A673 (cell line): ENCODE measurements at regions of chr6 and their contacts with region 1.

Region 1: DNA sequence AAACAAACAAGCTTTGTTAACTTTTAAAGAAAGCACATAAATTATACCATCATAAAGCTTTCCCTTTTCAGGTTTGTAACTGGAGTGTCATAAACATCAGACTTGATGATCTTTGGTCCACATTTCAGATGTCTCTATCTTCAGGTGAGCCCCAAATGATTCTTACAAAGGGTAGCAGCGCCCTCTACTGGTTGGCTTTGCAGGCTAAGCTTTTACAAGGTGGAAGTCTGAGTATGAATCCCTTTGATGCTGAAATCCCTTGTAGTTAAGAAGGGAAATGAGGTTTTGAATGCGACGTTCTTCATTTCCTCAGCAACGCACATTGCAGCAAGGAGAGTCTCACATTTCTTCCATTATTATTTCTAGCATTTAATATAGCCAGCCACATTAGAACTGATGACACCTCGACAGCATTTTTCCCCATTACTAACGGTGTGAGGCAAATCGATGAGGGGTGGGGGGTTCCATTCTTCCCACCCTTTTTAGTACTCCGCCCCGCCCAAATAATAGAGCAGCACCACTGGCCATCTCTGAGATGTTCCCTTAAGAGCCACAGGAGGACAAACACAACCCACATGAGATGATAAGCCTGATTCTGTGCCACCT is 126.3 kb upstream of the NT5E start:
- DNase-seq: peak; percentile 87
- H3K4me3 ChIP-seq: no peak overlapping the region
- H3K27ac ChIP-seq: no peak overlapping the region
- H3K4me1 ChIP-seq: no peaks in the 10 kb centered on the region
- H3K27me3 ChIP-seq: peaks cover 4% of the 10 kb centered on the region
- CTCF ChIP-seq: peak; percentile 94

Region 2: DNA sequence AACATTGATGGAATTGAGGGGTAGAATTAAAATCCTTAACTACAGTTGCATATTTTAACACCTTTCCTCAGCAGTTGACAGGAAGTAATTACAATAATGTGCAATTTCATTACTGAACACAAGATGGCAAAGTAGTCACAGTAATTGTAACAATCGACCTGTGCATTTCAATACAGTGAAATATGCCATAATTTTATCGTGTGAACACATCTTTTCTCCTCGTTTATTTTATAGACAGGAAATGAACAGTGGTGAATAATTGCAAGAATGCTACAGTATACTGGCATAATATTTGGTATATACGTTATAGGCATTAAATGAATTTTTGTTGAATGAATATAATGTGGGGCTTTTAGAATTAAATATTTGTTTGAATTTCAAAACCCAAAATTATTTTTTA is 1439.0 kb before region 1 on chr6:
- CTCF ChIA-PET with region 1: no interaction called
- POLR2A ChIA-PET with region 1: no interaction called
- intact Hi-C with region 1: loop called (anchors 10 kb)
- DNase-seq: peak; percentile 80
- H3K4me3 ChIP-seq: no peak overlapping the region
- H3K27ac ChIP-seq: no peak overlapping the region
- H3K4me1 ChIP-seq: peaks cover 18% of the 10 kb centered on the region
- H3K27me3 ChIP-seq: no peaks in the 10 kb centered on the region
- CTCF ChIP-seq: peak; percentile 79

Region 3: DNA sequence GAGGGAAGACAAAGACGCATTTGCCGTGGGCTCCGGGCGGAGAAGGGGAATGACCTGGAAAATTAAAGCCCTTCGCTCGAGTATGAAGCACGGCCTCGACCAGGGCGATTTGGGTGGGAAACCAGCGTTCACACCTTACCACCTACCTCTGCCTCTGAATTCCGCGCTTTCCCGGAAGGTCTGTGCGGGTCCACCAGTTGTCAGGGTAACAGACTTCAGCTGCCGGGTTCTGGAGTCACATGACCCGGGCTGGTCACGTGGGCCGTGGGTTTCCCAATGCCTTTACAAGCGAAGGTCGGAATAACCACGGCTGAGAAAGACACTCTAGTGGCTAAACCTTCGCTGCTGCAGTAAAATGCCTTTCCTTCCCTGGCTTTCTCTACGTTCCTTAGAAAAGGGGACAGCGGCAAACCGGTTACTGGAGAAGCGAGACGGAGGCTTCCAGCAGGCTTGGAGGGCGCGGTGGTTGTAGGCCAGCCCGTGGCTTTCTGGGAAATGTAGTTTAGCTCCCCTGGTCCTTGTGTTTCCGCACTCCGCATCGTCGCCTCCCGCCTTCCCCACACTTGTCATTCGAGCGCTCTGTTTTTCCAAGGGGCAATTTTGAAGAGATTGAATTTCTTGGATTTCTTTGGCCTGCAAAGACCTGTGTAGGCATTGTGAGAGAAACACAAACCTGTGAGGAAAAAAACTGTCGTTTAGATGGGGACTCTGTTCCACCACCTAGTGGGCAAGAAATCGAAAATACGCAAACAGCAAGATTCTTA is 1095.9 kb before region 1 on chr6 and contains the start of gene CEP162:
- CTCF ChIA-PET with region 1: interaction called, 3 read pairs
- POLR2A ChIA-PET with region 1: no interaction called
- intact Hi-C with region 1: loop called (anchors 10 kb)
- DNase-seq: peak; percentile 93
- H3K4me3 ChIP-seq: peak within 1 kb of the TSS; percentile 74
- H3K27ac ChIP-seq: peak within 1 kb of the TSS; percentile 70
- H3K4me1 ChIP-seq: peaks cover 8% of the 10 kb centered on the region
- H3K27me3 ChIP-seq: peaks cover 12% of the 10 kb centered on the region
- CTCF ChIP-seq: peak; percentile 76
- total RNA-seq, gene CEP162: 12.1 and 15.9 TPM in 2 replicates

Region 4: GRCh38 chr6:84422380-84422968 is 901.1 kb before region 1 on chr6:
- CTCF ChIA-PET with region 1: no interaction called
- POLR2A ChIA-PET with region 1: no interaction called
- intact Hi-C with region 1: loop called (anchors 2 kb)
- DNase-seq: peak; percentile 63
- H3K4me3 ChIP-seq: no peak overlapping the region
- H3K27ac ChIP-seq: no peak overlapping the region
- H3K4me1 ChIP-seq: no peaks in the 10 kb centered on the region
- H3K27me3 ChIP-seq: peaks cover 27% of the 10 kb centered on the region
- CTCF ChIP-seq: peak; percentile 76

Region 5: GRCh38 chr6:84764332-84765049 is 559.0 kb before region 1 on chr6 and contains the start of gene TBX18:
- CTCF ChIA-PET with region 1: no interaction called
- POLR2A ChIA-PET with region 1: no interaction called
- intact Hi-C with region 1: loop called (anchors 10 kb)
- DNase-seq: peak; percentile 95
- H3K4me3 ChIP-seq: peak within 1 kb of the TSS; percentile 72
- H3K27ac ChIP-seq: peak within 1 kb of the TSS; percentile 89
- H3K4me1 ChIP-seq: peaks cover 17% of the 10 kb centered on the region
- H3K27me3 ChIP-seq: peaks cover 71% of the 10 kb centered on the region
- CTCF ChIP-seq: 0 out of 2 replicates have a peak, but pooled peaks have one; percentile 27
- total RNA-seq, gene TBX18: 14.6 and 16.0 TPM in 2 replicates

Region 6: GRCh38 chr6:85096976-85097375 is 226.6 kb before region 1 on chr6:
- CTCF ChIA-PET with region 1: no interaction called
- POLR2A ChIA-PET with region 1: no interaction called
- intact Hi-C with region 1: no loop called
- DNase-seq: no peak
- H3K4me3 ChIP-seq: no peak overlapping the region
- H3K27ac ChIP-seq: no peak overlapping the region
- H3K4me1 ChIP-seq: no peaks in the 10 kb centered on the region
- H3K27me3 ChIP-seq: no peaks in the 10 kb centered on the region
- CTCF ChIP-seq: no peak

Region 7: DNA sequence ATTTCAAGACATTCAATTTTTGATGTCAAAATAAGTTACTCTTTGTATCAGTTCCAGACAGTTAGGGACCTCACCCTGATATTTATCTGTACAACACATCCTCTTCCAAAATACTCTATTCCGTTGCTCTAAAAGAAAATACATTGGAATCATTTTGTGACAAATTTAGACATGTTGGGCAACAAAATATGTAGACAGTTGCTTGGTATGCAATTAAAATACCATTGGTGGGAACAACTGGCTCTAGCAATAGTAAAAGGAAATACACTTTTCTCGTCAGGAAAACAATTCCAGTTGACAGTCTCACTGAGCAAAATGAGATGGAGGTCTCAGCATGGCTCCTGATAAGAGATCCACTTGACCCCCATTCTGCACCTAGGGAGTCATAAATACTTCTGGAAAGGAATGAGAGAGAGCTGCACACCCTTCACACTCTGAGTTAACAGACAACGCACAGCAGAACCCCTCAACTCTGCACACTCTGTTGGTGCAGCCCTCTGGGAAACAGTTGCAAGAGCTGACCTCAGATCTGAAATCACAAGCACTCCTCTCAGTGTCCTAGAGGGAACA is 45.0 kb before region 1 on chr6:
- CTCF ChIA-PET with region 1: no interaction called
- POLR2A ChIA-PET with region 1: no interaction called
- intact Hi-C with region 1: no loop called
- DNase-seq: no peak
- H3K4me3 ChIP-seq: no peak overlapping the region
- H3K27ac ChIP-seq: no peak overlapping the region
- H3K4me1 ChIP-seq: no peaks in the 10 kb centered on the region
- H3K27me3 ChIP-seq: no peaks in the 10 kb centered on the region
- CTCF ChIP-seq: no peak